Cardiac septum (tissue), 1 donor: ENCODE measurements at regions of chr3 and their contacts with region 1.

Region 1: GRCh38 chr3:64903006-64903405 is 215.2 kb upstream of the ADAMTS9 start:
- DNase-seq: no peak

Region 2: DNA sequence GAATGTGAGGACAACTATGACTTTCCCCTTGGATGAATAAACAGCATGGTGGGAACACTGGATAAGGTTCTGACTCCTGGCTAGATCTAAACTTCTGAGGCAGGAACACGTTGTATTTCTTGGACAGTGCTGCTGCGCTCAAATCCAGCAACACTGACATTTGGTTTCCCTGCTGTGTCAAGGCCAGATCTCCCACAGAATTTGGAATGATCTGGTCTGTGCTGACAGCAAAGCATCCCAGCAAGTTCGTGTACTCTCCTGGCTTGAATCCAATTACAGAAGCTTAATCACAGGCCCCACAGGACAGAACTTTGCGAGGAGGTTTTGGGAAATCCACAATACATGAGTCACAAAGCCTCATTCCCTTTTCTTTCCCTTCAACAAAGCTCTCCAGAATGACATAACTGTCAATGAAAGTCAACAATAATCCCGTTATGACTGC is 307.7 kb before region 1 on chr3:
- intact Hi-C with region 1: no loop called
- DNase-seq: no peak

Region 3: DNA sequence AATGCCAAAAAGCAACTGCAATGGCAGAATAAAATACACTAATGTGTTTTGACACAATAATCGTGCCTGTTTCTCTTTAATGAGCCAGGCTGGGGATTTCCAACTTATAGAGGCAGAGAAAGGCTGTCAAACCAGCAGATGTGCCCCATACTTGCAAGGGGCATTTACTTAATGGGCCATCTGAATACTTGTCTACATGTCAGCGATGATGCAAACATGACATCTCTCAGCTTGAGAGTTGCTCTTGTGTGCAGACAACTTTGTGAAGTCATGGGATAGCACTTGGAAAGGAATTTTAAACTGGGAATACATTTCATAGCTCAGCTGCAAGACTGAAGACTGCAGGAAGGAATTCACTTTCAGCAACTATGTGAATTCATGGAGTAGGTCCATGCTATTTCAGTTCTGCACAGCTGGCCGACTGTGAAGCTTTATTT is 87.8 kb before region 1 on chr3:
- intact Hi-C with region 1: loop called (anchors 5 kb)
- DNase-seq: no peak

Region 4: GRCh38 chr3:64856106-64856505 is 46.9 kb before region 1 on chr3:
- intact Hi-C with region 1: no loop called
- DNase-seq: no peak